T-cell (primary cell): ENCODE measurements at regions of chr10 and their contacts with region 1.

Region 1: GRCh38 chr10:124719213-124719851 is 24.8 kb downstream of the FAM53B start:
- DNase-seq: peak in 33 of 35 experiments; percentile 59 to 89 (median 74)
- ATAC-seq: peak; percentile 59 to 64 (median 62)
- H3K4me3 ChIP-seq: peak overlapping the region in 1 of 2 donors; percentile 26
- H3K4me3 Mint-ChIP-seq: peak overlapping the region; percentile 56 to 76 (median 63)
- H3K27ac ChIP-seq: peak overlapping the region; percentile 98
- H3K27ac Mint-ChIP-seq: peak overlapping the region; percentile 83 to 93
- H3K4me1 ChIP-seq: peaks cover 69 to 98% of the 10 kb centered on the region in 2 experiments
- H3K4me1 Mint-ChIP-seq: peaks cover 95 to 99% (median 98%) of the 10 kb centered on the region in 3 donors
- H3K27me3 ChIP-seq: no peaks in the 10 kb centered on the region
- H3K27me3 Mint-ChIP-seq: no peaks in the 10 kb centered on the region

Region 2: DNA sequence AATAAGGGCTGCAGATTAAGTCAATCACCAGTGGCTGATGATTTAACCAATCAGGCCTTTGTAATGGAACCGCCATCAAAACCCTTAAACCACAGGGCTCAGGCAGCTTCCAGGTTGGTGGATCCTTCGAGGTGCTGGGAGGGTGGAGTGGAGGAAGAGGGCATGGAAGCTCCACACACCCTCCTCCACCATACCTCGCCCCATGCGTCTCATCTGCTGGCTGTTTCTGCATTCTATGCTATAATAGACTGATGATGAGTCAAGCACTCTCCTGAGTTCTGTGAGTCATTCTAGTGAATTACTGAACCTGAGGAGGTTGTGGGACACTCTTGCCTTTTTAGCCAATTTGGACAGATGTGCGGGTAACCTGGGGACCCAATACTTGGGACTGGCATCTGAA is 669.8 kb before region 1 on chr10:
- CTCF ChIA-PET with region 1: no interaction called
- POLR2A ChIA-PET with region 1: no interaction called
- DNase-seq: no peak
- ATAC-seq: no peak
- H3K4me3 ChIP-seq: no peak overlapping the region
- H3K4me3 Mint-ChIP-seq: no peak overlapping the region
- H3K27ac ChIP-seq: no peak overlapping the region
- H3K27ac Mint-ChIP-seq: no peak overlapping the region
- H3K4me1 ChIP-seq: no peaks in the 10 kb centered on the region
- H3K4me1 Mint-ChIP-seq: no peaks in the 10 kb centered on the region
- H3K27me3 ChIP-seq: no peaks in the 10 kb centered on the region
- H3K27me3 Mint-ChIP-seq: no peaks in the 10 kb centered on the region

Region 3: GRCh38 chr10:124677749-124678556 is 41.4 kb before region 1 on chr10:
- CTCF ChIA-PET with region 1: interaction called, 6 to 16 read pairs
- POLR2A ChIA-PET with region 1: interaction called in 1 of 2 experiments, 5 read pairs
- DNase-seq: peak in 1 of 35 experiments; percentile 23
- ATAC-seq: peak in 3 of 4 experiments; percentile 12 to 28 (median 14)
- H3K4me3 ChIP-seq: peak overlapping the region; percentile 3 to 32
- H3K4me3 Mint-ChIP-seq: peak overlapping the region; percentile 61 to 88 (median 66)
- H3K27ac ChIP-seq: peak overlapping the region; percentile 67
- H3K27ac Mint-ChIP-seq: peak overlapping the region; percentile 96 to 97
- H3K4me1 ChIP-seq: peaks cover 62 to 97% of the 10 kb centered on the region in 2 experiments
- H3K4me1 Mint-ChIP-seq: peaks cover 81 to 92% (median 87%) of the 10 kb centered on the region in 3 donors
- H3K27me3 ChIP-seq: no peaks in the 10 kb centered on the region
- H3K27me3 Mint-ChIP-seq: no peaks in the 10 kb centered on the region

Region 4: DNA sequence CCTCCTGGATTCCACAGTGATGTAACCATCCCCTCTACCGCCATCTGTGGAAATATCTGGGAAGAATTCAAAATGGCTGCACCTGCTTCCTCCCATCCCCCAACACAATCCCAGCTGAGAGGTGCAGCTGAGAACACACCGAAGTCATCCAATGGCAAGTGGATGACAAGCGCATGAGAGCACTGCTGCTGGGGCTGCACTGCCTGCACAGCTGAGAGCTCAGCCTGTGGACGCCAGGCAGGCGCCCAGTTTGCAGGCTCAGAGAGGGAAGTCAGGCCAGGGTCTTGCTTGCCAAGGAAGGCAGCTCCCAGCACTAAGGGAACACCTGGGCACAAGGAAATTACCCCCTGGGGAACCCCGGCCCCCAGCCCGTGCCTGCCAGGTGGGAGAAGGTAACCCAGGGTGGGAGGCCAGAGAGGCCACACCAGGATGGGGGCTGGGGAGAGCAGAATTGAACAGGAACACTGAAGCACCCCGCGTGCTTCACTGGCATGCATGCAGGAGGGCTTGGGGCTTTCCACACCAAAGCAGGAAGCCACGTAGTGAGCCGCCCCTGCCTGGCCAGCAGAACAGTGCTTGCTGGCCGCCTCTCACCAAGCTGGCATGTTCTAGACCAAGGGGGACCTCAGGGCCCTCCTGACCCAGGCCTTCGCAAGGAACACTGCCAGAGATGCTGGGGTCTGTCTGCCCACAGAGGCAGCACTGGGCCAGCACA is 21.3 kb before region 1 on chr10:
- CTCF ChIA-PET with region 1: interaction called, 4 to 21 read pairs
- POLR2A ChIA-PET with region 1: interaction called, 4 to 6 read pairs
- DNase-seq: peak in 28 of 35 experiments; percentile 33 to 80 (median 46)
- ATAC-seq: peak; percentile 43 to 69 (median 50)
- H3K4me3 ChIP-seq: no peak overlapping the region
- H3K4me3 Mint-ChIP-seq: peak overlapping the region; percentile 28 to 80 (median 47)
- H3K27ac ChIP-seq: peak overlapping the region; percentile 90
- H3K27ac Mint-ChIP-seq: peak overlapping the region; percentile 99 to 100
- H3K4me1 ChIP-seq: peaks cover 49 to 98% of the 10 kb centered on the region in 2 experiments
- H3K4me1 Mint-ChIP-seq: peaks cover 93 to 100% (median 96%) of the 10 kb centered on the region in 3 donors
- H3K27me3 ChIP-seq: no peaks in the 10 kb centered on the region
- H3K27me3 Mint-ChIP-seq: no peaks in the 10 kb centered on the region

Region 5: GRCh38 chr10:124708922-124709520 is 10.3 kb before region 1 on chr10:
- CTCF ChIA-PET with region 1: interaction called, 5 to 18 read pairs
- POLR2A ChIA-PET with region 1: interaction called, 3 to 5 read pairs
- DNase-seq: peak in 1 of 35 experiments; percentile 34
- ATAC-seq: peak in 1 of 4 experiments; percentile 46
- H3K4me3 ChIP-seq: no peak overlapping the region
- H3K4me3 Mint-ChIP-seq: peak overlapping the region in 1 of 3 donors; percentile 33
- H3K27ac ChIP-seq: peak overlapping the region; percentile 93
- H3K27ac Mint-ChIP-seq: peak overlapping the region; percentile 99 to 100
- H3K4me1 ChIP-seq: peaks cover 23 to 96% of the 10 kb centered on the region in 2 experiments
- H3K4me1 Mint-ChIP-seq: peaks cover 88 to 93% (median 89%) of the 10 kb centered on the region in 3 donors
- H3K27me3 ChIP-seq: no peaks in the 10 kb centered on the region
- H3K27me3 Mint-ChIP-seq: no peaks in the 10 kb centered on the region